ENCODE measurements at regions of chr14 and their contacts with region 1.

Region 1: GRCh38 chr14:22570132-22570949 is 18.7 kb downstream of the DAD1 start:
- DNase-seq: peak; percentile 99
- ATAC-seq: peak; percentile 72
- H3K4me3 ChIP-seq: peak overlapping the region; percentile 30
- H3K27ac ChIP-seq: peak overlapping the region; percentile 97
- H3K4me1 ChIP-seq: peaks cover 43% of the 10 kb centered on the region
- H3K27me3 ChIP-seq: no peaks in the 10 kb centered on the region
- CTCF ChIP-seq: peak; percentile 98 to 100 (median 100); a peak in 5 of 6 replicates
- EP300 ChIP-seq: no peak
- POLR2A ChIP-seq: no peak
- RAD21 ChIP-seq: peak; percentile 99

Region 2: DNA sequence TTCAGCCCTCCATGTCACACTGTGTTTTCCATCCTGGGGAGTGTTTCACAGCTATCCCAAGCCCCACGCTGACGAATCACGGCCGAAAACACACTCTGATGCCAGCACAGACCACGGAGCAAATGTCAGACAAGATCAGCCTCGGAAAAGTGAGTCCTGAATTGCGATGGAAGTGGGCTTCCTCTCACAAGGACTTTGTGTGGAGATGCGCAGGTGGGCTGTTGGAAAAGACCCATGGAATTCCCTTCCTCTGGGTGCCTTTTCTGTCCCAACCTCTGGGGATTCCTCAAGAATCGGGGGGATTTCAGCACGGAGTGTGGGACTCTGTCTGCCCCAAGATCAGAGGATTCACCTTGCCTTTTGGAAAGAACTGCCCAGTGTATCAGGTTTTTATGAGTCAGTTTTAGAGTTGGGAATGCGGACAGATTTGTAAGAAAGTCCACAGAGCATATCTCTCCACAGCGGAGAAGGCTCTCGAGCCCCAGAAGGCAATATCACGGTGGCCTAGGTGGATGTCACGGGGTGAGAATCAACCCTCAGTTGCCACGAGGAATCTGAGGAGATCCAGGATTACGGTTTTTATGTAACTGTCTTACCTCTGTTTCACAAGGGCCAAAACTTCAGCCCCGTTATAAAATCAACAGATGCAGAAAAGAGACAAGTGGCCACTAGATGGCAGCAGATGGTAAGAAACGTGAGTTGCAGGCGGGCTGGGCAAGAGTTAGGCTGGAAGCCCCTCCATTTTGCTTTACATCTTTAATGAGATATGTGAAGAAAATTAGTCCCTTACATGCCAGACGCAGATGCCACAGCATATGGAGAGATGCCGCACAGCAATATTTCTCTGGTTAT is 183.2 kb before region 1 on chr14:
- CTCF ChIA-PET with region 1: interaction called, 100 read pairs
- POLR2A ChIA-PET with region 1: interaction called, 16 read pairs
- RAD21 ChIA-PET with region 1: interaction called, 156 read pairs
- SMC1A ChIA-PET with region 1: interaction called, 107 read pairs
- in situ Hi-C with region 1: loop called (anchors 5 kb)
- intact Hi-C with region 1: loop called (anchors 1 kb)
- DNase-seq: peak; percentile 77
- ATAC-seq: peak; percentile 18
- H3K4me3 ChIP-seq: no peak overlapping the region
- H3K27ac ChIP-seq: no peak overlapping the region
- H3K4me1 ChIP-seq: peaks cover 69% of the 10 kb centered on the region
- H3K27me3 ChIP-seq: no peaks in the 10 kb centered on the region
- CTCF ChIP-seq: peak; percentile 67 to 87 (median 79)
- EP300 ChIP-seq: no peak
- POLR2A ChIP-seq: no peak
- RAD21 ChIP-seq: peak; percentile 98

Region 3: GRCh38 chr14:22497144-22497423 is 73.3 kb before region 1 on chr14:
- CTCF ChIA-PET with region 1: interaction called, 10 read pairs
- POLR2A ChIA-PET with region 1: interaction called, 5 read pairs
- RAD21 ChIA-PET with region 1: interaction called, 83 read pairs
- SMC1A ChIA-PET with region 1: interaction called, 64 read pairs
- in situ Hi-C with region 1: no loop called
- intact Hi-C with region 1: no loop called
- DNase-seq: no peak
- ATAC-seq: peak; percentile 18
- H3K4me3 ChIP-seq: 0 out of 2 replicates have a peak overlapping the region, but pooled peaks have one; percentile 35
- H3K27ac ChIP-seq: peak overlapping the region; percentile 65
- H3K4me1 ChIP-seq: peaks cover 62% of the 10 kb centered on the region
- H3K27me3 ChIP-seq: no peaks in the 10 kb centered on the region
- CTCF ChIP-seq: no peak
- EP300 ChIP-seq: no peak
- POLR2A ChIP-seq: no peak
- RAD21 ChIP-seq: no peak

Region 4: DNA sequence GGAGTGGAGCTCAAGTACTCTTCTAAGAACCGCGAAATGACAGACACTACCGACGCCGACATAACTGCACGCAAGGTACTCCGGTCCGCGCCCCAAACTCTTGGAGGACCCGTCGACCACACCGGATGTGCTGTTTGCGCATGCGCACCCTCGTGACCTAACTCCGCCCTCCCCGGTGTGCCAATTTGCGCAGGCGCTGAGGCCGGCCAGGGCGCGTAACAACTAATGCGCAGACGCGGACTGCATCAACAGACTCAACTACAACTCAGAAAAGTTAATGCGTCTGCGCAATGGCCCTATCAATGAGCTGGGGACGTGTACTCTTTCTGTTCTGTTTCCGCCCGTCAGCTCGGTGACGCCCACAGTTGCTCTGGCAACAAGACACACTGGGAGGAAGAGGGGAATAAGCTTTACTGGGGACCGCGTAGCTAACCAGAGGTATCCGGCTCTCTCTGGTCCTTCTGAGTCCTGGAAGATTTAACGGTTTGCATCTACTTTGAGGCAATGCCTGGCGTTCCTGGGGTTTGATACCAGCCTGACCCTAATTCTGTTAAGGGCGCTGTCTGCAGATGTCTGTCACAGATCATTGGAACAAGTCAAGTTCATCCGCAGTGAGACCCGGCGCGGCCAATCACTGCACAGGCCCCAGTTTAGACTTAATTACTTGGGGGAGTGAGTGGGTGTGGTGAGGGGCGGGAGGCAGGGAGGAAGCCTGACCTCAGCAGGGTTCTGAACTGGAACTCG is 18.9 kb after region 1 on chr14 and contains the start of gene DAD1:
- CTCF ChIA-PET with region 1: interaction called, 56 read pairs
- POLR2A ChIA-PET with region 1: interaction called, 7 read pairs
- RAD21 ChIA-PET with region 1: interaction called, 42 read pairs
- SMC1A ChIA-PET with region 1: interaction called, 31 read pairs
- in situ Hi-C with region 1: no loop called
- intact Hi-C with region 1: no loop called
- DNase-seq: peak; percentile 100
- ATAC-seq: peak; percentile 93
- H3K4me3 ChIP-seq: peak within 1 kb of the TSS; percentile 92
- H3K27ac ChIP-seq: peak within 1 kb of the TSS; percentile 91
- H3K4me1 ChIP-seq: peaks cover 20% of the 10 kb centered on the region
- H3K27me3 ChIP-seq: no peaks in the 10 kb centered on the region; a peak in 1 of 4 replicates
- CTCF ChIP-seq: 0 out of 6 replicates have a peak, but pooled peaks of 1 of the 3 experiments have one; percentile 13
- EP300 ChIP-seq: no peak; a peak in 1 of 4 replicates
- POLR2A ChIP-seq: peak; percentile 98
- RAD21 ChIP-seq: no peak
- polyA plus RNA-seq, gene DAD1: 711 to 920 TPM

Region 5: DNA sequence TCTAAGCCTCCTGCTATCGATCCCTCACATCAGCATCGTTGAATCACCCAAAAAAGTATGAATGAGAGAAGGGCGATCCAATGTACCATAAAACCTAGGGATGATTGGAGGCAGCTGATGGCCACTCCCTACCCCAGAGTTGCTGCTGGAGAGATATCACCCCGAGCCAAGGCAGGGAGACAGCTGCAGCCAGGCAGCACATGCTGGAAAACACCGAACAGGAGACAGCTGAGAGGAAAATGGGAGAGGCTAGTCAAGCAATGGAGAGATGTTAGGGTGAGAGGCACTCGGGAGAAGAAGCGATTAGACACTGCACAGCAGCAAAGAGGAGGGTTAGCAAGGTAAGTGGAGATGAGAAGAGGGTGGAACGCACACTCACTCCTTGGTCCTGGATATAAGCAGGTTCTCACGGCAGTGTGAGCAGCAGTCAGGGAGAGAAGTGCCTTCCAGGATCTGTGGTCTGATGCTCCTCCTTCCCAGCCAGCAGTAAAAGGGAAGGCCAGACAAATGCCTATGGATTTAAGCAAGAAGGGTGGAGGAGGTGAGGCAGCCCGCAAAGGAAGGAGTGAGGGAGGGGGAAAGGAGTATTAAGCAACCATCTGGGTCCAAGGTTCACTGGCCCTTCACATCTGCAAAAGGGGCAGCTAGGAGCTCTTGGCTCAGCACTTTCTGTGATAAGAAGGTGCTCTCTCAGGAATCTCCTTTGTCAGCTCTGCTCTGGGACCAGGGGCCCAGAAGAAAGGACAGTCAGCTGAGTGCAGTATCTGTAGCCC is 244.8 kb after region 1 on chr14 and contains the start of gene SLC7A7:
- CTCF ChIA-PET with region 1: interaction called, 11 read pairs
- POLR2A ChIA-PET with region 1: interaction called, 3 read pairs
- RAD21 ChIA-PET with region 1: interaction called, 17 read pairs
- SMC1A ChIA-PET with region 1: interaction called, 8 read pairs
- in situ Hi-C with region 1: no loop called
- intact Hi-C with region 1: no loop called
- DNase-seq: no peak
- ATAC-seq: peak; percentile 6
- H3K4me3 ChIP-seq: peak within 1 kb of the TSS; percentile 66
- H3K27ac ChIP-seq: peak within 1 kb of the TSS; percentile 75
- H3K4me1 ChIP-seq: peaks cover 28% of the 10 kb centered on the region
- H3K27me3 ChIP-seq: no peaks in the 10 kb centered on the region
- CTCF ChIP-seq: no peak
- EP300 ChIP-seq: no peak
- POLR2A ChIP-seq: no peak
- RAD21 ChIP-seq: no peak
- polyA plus RNA-seq, gene SLC7A7: 48.1 to 72.7 TPM

Region 6: GRCh38 chr14:22986508-22987054 is 416.2 kb after region 1 on chr14:
- CTCF ChIA-PET with region 1: interaction called, 11 read pairs
- POLR2A ChIA-PET with region 1: no interaction called
- RAD21 ChIA-PET with region 1: interaction called, 8 read pairs
- SMC1A ChIA-PET with region 1: interaction called, 3 read pairs
- in situ Hi-C with region 1: loop called (anchors 5 kb)
- intact Hi-C with region 1: loop called (anchors 1 kb)
- DNase-seq: no peak
- ATAC-seq: peak; percentile 90
- H3K4me3 ChIP-seq: no peak overlapping the region
- H3K27ac ChIP-seq: no peak overlapping the region
- H3K4me1 ChIP-seq: no peaks in the 10 kb centered on the region; the same call in 1 of the 2 replicates
- H3K27me3 ChIP-seq: peaks cover 3% of the 10 kb centered on the region in 2 experiments
- CTCF ChIP-seq: peak; percentile 85 to 94 (median 93)
- EP300 ChIP-seq: no peak
- POLR2A ChIP-seq: no peak
- RAD21 ChIP-seq: peak; percentile 95

Measured in GM12878 (cell line).